Activated CD4-positive, alpha-beta T cell treated with anti-CD3 and anti-CD28 coated beads for 36 hours (primary cell): ENCODE measurements at regions of chr16 and their contacts with region 1.

Region 1: GRCh38 chr16:57535680-57536305 is 578 bp downstream of the CCDC102A start:
- DNase-seq: peak; percentile 97
- ATAC-seq: peak; percentile 80
- H3K4me3 Mint-ChIP-seq: peak overlapping the region; percentile 78
- H3K27ac Mint-ChIP-seq: peak overlapping the region; percentile 94
- H3K4me1 Mint-ChIP-seq: peaks cover 70% of the 10 kb centered on the region
- H3K27me3 Mint-ChIP-seq: no peaks in the 10 kb centered on the region

Region 2: GRCh38 chr16:56988948-56989945 is 546.5 kb before region 1 on chr16 and contains the start of gene NLRC5:
- CTCF ChIA-PET with region 1: no interaction called
- POLR2A ChIA-PET with region 1: no interaction called
- intact Hi-C with region 1: loop called in 1 of 2 experiments (anchors 5 kb)
- DNase-seq: peak; percentile 97
- ATAC-seq: peak; percentile 78
- H3K4me3 Mint-ChIP-seq: peak within 1 kb of the TSS; percentile 98
- H3K27ac Mint-ChIP-seq: peak within 1 kb of the TSS; percentile 99
- H3K4me1 Mint-ChIP-seq: peaks cover 69% of the 10 kb centered on the region
- H3K27me3 Mint-ChIP-seq: no peaks in the 10 kb centered on the region
- total RNA-seq, gene NLRC5: 143 to 175 TPM

Region 3: GRCh38 chr16:57462209-57462977 is 73.4 kb before region 1 on chr16 and contains the start of gene POLR2C:
- CTCF ChIA-PET with region 1: no interaction called
- POLR2A ChIA-PET with region 1: no interaction called
- intact Hi-C with region 1: loop called in 1 of 2 experiments (anchors 1 kb)
- DNase-seq: peak; percentile 96
- ATAC-seq: peak; percentile 96
- H3K4me3 Mint-ChIP-seq: peak within 1 kb of the TSS; percentile 90
- H3K27ac Mint-ChIP-seq: peak within 1 kb of the TSS; percentile 99
- H3K4me1 Mint-ChIP-seq: peaks cover 24% of the 10 kb centered on the region
- H3K27me3 Mint-ChIP-seq: no peaks in the 10 kb centered on the region
- total RNA-seq, gene POLR2C: 54.3 to 57.1 TPM

Region 4: DNA sequence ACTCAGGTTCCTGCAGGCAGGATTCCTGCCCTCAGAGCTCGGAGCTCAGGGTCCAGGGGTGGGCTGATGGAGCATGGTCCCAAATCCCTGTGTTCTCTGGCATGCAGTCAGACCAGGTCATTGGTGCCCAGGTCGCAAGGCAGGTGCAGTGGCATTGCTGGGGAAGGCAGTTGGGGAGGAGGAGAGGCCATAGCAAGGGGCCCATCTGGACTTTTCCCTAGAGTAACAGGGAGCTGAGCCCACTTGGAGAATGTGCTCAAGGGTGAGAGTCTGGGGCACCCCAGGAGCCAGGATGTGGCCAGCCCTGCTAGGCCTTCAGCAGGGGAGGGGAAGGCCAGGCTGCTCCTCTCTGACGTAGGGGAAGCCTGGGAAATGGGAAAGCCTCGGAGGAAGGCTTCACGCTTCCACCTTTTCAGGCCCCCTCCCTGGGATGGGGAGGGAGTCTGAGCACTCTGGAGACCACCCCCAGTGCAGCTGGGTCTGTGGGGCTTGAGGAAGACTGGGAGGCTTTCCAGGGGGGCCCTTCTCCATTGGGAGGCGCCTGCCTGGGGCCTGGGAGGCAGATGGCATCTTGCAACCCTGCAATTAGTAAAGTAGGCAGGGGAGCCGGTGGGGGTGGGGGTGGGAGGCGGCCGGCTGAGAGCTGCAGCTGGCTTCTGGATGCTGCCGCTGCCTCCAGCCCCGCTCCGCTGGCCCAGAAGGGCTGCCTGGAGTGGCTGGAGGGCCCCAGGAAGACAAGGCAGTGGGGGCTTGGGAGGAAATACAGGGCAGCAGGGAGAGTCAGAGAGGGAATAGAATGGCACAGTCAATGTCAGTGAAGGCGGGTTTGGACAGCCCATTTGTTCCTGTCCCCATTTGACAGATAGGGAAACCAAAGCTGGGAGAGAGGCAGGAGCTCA is 28.4 kb before region 1 on chr16:
- CTCF ChIA-PET with region 1: no interaction called
- POLR2A ChIA-PET with region 1: no interaction called
- intact Hi-C with region 1: no loop called
- DNase-seq: no peak
- ATAC-seq: no peak
- H3K4me3 Mint-ChIP-seq: no peak overlapping the region
- H3K27ac Mint-ChIP-seq: no peak overlapping the region
- H3K4me1 Mint-ChIP-seq: no peaks in the 10 kb centered on the region
- H3K27me3 Mint-ChIP-seq: no peaks in the 10 kb centered on the region

Region 5: DNA sequence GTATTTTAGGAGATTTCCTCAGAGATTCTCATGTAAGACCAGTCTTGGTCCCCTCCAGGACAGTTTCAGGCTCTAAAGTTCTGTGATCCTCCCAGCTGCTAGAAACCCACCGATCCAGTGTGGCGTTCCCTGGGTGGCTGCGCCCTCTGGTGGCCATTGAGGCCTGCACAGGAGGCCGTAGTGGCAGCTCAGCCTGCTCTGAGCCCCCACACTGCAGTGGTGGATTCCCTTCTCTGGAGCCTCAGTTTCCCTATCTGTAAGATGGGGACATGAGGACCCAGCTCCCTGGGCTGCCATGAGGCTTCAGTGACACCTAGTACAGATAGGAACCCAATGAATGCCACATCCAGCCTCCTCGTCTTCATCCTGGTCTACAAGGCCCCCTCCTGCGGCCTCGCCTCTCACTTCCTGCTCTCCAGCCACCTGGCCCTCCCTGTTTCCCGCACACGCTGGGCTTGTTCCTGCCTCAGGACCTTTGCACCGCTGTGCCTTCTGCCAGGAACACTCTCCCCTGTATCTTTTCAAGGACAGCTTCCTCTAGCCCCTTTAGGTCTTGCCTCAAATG is 15.9 kb before region 1 on chr16:
- CTCF ChIA-PET with region 1: interaction called, 14 read pairs
- POLR2A ChIA-PET with region 1: no interaction called
- intact Hi-C with region 1: no loop called
- DNase-seq: peak; percentile 90
- ATAC-seq: peak; percentile 96
- H3K4me3 Mint-ChIP-seq: no peak overlapping the region
- H3K27ac Mint-ChIP-seq: no peak overlapping the region
- H3K4me1 Mint-ChIP-seq: peaks cover 4% of the 10 kb centered on the region
- H3K27me3 Mint-ChIP-seq: no peaks in the 10 kb centered on the region

Region 6: DNA sequence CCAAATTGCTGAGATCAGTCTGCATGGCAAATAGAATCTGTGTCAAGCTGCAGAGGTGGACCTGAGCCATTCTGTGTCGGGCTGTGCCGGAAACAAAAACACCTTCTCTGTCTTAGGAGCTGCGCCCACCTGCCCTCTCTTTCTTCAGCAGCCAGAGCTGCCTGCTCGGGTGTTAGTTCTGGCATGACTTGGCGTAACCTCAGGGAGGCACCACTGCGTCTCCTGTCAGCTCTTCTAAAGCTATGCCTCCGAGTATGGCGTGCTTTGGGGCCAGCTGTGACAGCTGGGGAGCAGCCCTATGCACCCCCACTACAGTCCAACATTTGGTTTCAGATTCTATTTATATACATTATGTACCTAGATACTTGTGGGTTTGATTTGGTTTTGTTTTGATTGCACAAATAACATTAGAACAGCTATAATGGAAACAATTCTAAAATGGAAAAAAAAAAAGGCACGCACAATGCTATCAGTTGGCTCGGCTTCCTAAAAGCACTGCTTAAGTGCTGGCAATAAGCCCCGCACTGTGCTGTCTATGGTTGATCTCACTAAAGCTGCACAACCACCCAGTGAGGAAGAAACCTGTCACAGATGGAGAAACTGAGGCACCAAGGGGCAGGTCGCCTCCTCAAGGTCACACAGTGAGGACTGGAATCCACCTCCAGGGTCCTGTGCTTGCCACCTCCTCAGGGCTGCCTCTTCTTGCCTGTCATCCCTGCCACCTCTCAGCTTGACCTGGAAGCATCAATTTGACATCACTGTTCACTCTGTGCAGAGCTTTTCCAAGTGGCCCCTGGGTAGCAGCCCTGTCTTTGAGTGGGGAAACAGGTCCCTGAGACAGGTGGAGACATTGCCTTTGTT is 74.0 kb after region 1 on chr16:
- CTCF ChIA-PET with region 1: interaction called, 9 read pairs
- POLR2A ChIA-PET with region 1: interaction called, 6 read pairs
- intact Hi-C with region 1: loop called (anchors 1 to 2 kb)
- DNase-seq: peak; percentile 93
- ATAC-seq: peak; percentile 94
- H3K4me3 Mint-ChIP-seq: peak overlapping the region; percentile 48
- H3K27ac Mint-ChIP-seq: peak overlapping the region; percentile 92
- H3K4me1 Mint-ChIP-seq: peaks cover 60% of the 10 kb centered on the region
- H3K27me3 Mint-ChIP-seq: no peaks in the 10 kb centered on the region